ENCODE measurements at regions of chr3 and their contacts with region 1.

Region 1: GRCh38 chr3:30606301-30607031 is at the start of gene TGFBR2:
- DNase-seq: peak; percentile 95
- H3K4me3 Mint-ChIP-seq: peak within 1 kb of the TSS; percentile 90
- H3K27ac Mint-ChIP-seq: peak within 1 kb of the TSS; percentile 96
- H3K4me1 Mint-ChIP-seq: peaks cover 57% of the 10 kb centered on the region
- H3K27me3 Mint-ChIP-seq: no peaks in the 10 kb centered on the region
- total RNA-seq, gene TGFBR2: 45.3 and 47.6 TPM in 2 replicates

Region 2: GRCh38 chr3:29718661-29719065 is 887.8 kb before region 1 on chr3:
- intact Hi-C with region 1: no loop called
- DNase-seq: no peak
- H3K4me3 Mint-ChIP-seq: no peak overlapping the region
- H3K27ac Mint-ChIP-seq: no peak overlapping the region
- H3K4me1 Mint-ChIP-seq: no peaks in the 10 kb centered on the region
- H3K27me3 Mint-ChIP-seq: no peaks in the 10 kb centered on the region

Region 3: DNA sequence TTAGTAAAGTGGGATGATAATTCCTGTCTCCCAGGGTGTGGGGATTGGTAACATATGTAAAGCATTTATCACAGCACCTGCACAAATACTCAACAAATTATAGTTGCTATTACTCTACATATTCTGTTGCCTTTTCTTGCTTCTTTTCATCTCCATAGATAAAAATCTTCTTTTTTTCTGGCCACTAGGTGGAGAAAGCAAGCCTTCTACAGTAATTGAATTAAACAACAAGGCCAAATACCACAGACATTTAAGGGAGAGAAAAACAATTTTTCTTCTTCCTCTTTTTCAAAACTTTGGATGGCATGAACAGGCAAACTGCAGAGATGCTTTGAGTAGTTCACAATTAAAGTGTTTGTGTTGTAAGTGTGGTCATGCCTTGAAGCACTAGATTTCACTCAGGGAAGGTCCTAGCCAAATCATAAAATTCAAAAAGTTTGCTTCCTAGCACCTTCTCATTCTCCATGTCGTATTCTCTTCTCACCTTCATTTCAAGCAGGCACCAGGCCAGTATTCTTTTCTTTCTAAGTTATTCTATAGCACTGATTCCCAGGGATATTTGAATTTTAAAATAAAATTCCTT is 493.5 kb before region 1 on chr3:
- intact Hi-C with region 1: loop called (anchors 10 kb)
- DNase-seq: peak; percentile 58
- H3K4me3 Mint-ChIP-seq: no peak overlapping the region
- H3K27ac Mint-ChIP-seq: no peak overlapping the region
- H3K4me1 Mint-ChIP-seq: peaks cover 3% of the 10 kb centered on the region
- H3K27me3 Mint-ChIP-seq: peaks cover 17% of the 10 kb centered on the region

Region 4: DNA sequence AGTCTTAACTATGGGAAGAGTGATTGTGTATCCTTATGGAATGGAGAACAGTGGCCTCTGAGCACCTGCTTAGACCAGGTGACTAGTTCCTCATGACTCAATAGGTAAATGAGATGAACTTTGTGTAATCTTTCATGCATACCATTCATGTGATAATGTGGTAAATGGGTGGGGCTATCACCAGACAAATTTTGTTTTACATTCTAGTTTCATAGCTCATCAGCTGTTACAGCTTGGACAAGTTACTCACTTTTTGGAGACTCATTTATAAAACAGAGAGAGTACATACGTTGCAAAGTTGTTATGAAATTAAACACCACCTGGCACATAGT is 103.8 kb before region 1 on chr3:
- intact Hi-C with region 1: loop called (anchors 5 kb)
- DNase-seq: no peak
- H3K4me3 Mint-ChIP-seq: no peak overlapping the region
- H3K27ac Mint-ChIP-seq: no peak overlapping the region
- H3K4me1 Mint-ChIP-seq: peaks cover 26% of the 10 kb centered on the region
- H3K27me3 Mint-ChIP-seq: no peaks in the 10 kb centered on the region

Region 5: DNA sequence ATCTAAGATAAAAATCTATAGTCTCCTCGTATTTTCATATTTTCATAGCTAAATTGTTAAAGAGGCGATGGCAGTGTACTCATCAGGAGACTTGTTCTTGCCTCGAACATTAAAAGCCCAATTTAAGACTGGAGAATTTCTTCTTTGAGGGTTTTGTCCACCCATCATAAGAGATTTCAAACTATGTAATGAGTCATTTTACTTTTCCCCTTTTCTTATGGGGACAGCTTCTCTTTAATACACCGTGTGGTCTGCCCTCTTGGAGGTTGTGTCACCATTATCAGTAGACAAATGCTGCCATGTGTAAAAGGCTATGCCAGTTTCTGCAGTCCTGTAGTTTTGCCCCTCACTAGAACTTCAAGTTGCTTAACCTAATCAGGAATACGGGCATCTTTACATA is 16.9 kb after region 1 on chr3:
- intact Hi-C with region 1: loop called (anchors 1 kb)
- DNase-seq: peak; percentile 58
- H3K4me3 Mint-ChIP-seq: peak overlapping the region; percentile 77
- H3K27ac Mint-ChIP-seq: peak overlapping the region; percentile 94
- H3K4me1 Mint-ChIP-seq: peaks cover 78% of the 10 kb centered on the region
- H3K27me3 Mint-ChIP-seq: no peaks in the 10 kb centered on the region

Region 6: GRCh38 chr3:30658328-30659052 is 52.0 kb after region 1 on chr3:
- intact Hi-C with region 1: loop called (anchors 1 kb)
- DNase-seq: peak; percentile 85
- H3K4me3 Mint-ChIP-seq: peak overlapping the region; percentile 84
- H3K27ac Mint-ChIP-seq: peak overlapping the region; percentile 97
- H3K4me1 Mint-ChIP-seq: peaks cover 85% of the 10 kb centered on the region
- H3K27me3 Mint-ChIP-seq: no peaks in the 10 kb centered on the region

Region 7: DNA sequence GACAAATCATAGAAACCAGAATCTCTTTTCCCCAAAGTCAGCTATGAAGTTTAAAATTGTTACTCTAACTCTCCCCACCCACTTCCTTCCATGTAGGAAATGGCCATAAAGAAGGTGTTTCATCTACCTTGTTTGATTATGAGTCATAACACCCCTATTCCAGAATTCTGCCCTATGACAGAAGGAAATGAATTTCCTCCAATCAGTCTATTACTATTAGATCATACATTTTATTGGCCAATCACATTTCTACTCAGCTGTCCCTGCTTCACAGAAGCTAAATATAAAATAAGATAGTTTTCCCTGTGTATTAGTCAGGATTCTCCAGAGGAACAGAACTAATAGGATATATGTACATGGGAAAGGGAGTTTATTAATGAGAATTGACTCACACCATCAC is 102.0 kb after region 1 on chr3:
- intact Hi-C with region 1: no loop called
- DNase-seq: no peak
- H3K4me3 Mint-ChIP-seq: no peak overlapping the region
- H3K27ac Mint-ChIP-seq: no peak overlapping the region
- H3K4me1 Mint-ChIP-seq: peaks cover 4% of the 10 kb centered on the region
- H3K27me3 Mint-ChIP-seq: no peaks in the 10 kb centered on the region